GM12878 (cell line): ENCODE measurements at regions of chr18 and their contacts with region 1.

Region 1: GRCh38 chr18:35497370-35498197 is at the start of gene INO80C:
- DNase-seq: peak; percentile 85
- ATAC-seq: peak; percentile 92
- H3K4me3 ChIP-seq: peak within 1 kb of the TSS; percentile 80
- H3K27ac ChIP-seq: peak within 1 kb of the TSS; percentile 98
- H3K4me1 ChIP-seq: no peaks in the 10 kb centered on the region; the same call in 1 of the 2 replicates
- H3K27me3 ChIP-seq: no peaks in the 10 kb centered on the region
- CTCF ChIP-seq: no peak
- EP300 ChIP-seq: peak; percentile 4 to 62; a peak in 2 of 4 replicates
- POLR2A ChIP-seq: peak; percentile 98
- RAD21 ChIP-seq: peak; percentile 31; the same call in 1 of the 2 replicates
- polyA plus RNA-seq, gene INO80C: 25.0 to 31.6 TPM

Region 2: DNA sequence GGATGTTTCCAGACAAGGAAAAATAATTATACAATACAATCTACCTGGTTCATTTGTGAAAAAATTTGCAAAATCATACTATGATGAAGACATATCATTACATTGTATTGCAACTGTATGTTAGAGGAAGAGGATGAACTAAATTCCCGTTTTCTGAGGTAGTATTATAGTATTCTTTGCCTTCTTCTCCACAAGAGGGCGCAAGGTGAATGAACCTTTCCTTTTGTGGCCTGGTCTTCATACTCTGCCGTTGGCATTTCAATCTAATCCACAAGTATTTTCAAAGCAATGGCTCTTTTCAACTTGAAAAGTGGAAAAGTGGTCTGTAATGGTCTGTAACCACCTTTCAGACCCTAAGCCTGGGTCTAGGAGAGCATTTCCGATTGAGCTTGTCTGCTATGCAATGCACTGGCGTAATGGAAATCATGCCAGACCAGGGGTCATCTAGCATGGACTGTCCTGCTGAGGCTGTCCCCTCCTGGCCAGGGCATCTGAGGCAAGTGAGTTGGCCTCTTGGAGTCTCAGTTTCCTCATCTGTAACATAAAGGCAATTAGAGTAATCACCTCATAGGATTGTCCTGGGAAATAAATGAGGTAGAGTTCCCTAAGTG is 89.6 kb before region 1 on chr18:
- CTCF ChIA-PET with region 1: interaction called, 21 read pairs
- POLR2A ChIA-PET with region 1: interaction called, 4 read pairs
- RAD21 ChIA-PET with region 1: interaction called, 7 read pairs
- SMC1A ChIA-PET with region 1: interaction called, 18 read pairs
- in situ Hi-C with region 1: no loop called
- intact Hi-C with region 1: loop called (anchors 5 kb)
- DNase-seq: no peak
- ATAC-seq: peak; percentile 78
- H3K4me3 ChIP-seq: no peak overlapping the region
- H3K27ac ChIP-seq: no peak overlapping the region
- H3K4me1 ChIP-seq: peaks cover 21% of the 10 kb centered on the region
- H3K27me3 ChIP-seq: no peaks in the 10 kb centered on the region
- CTCF ChIP-seq: peak; percentile 67 to 85 (median 76)
- EP300 ChIP-seq: no peak
- POLR2A ChIP-seq: no peak
- RAD21 ChIP-seq: peak; percentile 93

Region 3: GRCh38 chr18:35467624-35468016 is 30.0 kb before region 1 on chr18:
- CTCF ChIA-PET with region 1: interaction called, 4 read pairs
- POLR2A ChIA-PET with region 1: interaction called, 16 read pairs
- RAD21 ChIA-PET with region 1: interaction called, 8 read pairs
- SMC1A ChIA-PET with region 1: interaction called, 10 read pairs
- in situ Hi-C with region 1: no loop called
- intact Hi-C with region 1: no loop called
- DNase-seq: peak; percentile 19
- ATAC-seq: peak; percentile 87
- H3K4me3 ChIP-seq: no peak overlapping the region
- H3K27ac ChIP-seq: no peak overlapping the region
- H3K4me1 ChIP-seq: peaks cover 17% of the 10 kb centered on the region
- H3K27me3 ChIP-seq: no peaks in the 10 kb centered on the region
- CTCF ChIP-seq: no peak
- EP300 ChIP-seq: no peak
- POLR2A ChIP-seq: no peak
- RAD21 ChIP-seq: no peak

Region 4: DNA sequence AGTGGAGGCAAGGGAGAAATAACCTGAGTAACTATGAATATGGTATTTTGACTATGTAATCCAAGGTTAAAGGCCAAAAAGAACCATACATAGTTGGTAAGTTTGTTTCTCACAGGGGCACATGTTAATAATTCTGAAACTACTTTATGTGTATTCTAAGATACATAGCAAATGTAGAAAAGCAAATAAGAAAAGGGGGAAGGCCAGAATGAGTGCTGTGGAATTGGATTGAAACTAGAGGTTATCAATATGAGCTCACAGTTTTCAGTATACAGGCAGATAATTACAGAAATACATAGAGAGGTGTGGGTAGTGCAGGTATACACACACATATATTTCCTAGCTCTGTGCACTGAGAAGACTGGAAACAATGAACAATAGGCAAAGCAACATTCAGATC is 13.6 kb before region 1 on chr18:
- CTCF ChIA-PET with region 1: interaction called, 12 read pairs
- POLR2A ChIA-PET with region 1: interaction called, 106 read pairs
- RAD21 ChIA-PET with region 1: interaction called, 57 read pairs
- SMC1A ChIA-PET with region 1: interaction called, 122 read pairs
- in situ Hi-C with region 1: no loop called
- intact Hi-C with region 1: no loop called
- DNase-seq: no peak
- ATAC-seq: peak; percentile 89
- H3K4me3 ChIP-seq: no peak overlapping the region
- H3K27ac ChIP-seq: no peak overlapping the region
- H3K4me1 ChIP-seq: no peaks in the 10 kb centered on the region; the same call in 1 of the 2 replicates
- H3K27me3 ChIP-seq: no peaks in the 10 kb centered on the region
- CTCF ChIP-seq: no peak
- EP300 ChIP-seq: no peak
- POLR2A ChIP-seq: no peak
- RAD21 ChIP-seq: no peak

Region 5: DNA sequence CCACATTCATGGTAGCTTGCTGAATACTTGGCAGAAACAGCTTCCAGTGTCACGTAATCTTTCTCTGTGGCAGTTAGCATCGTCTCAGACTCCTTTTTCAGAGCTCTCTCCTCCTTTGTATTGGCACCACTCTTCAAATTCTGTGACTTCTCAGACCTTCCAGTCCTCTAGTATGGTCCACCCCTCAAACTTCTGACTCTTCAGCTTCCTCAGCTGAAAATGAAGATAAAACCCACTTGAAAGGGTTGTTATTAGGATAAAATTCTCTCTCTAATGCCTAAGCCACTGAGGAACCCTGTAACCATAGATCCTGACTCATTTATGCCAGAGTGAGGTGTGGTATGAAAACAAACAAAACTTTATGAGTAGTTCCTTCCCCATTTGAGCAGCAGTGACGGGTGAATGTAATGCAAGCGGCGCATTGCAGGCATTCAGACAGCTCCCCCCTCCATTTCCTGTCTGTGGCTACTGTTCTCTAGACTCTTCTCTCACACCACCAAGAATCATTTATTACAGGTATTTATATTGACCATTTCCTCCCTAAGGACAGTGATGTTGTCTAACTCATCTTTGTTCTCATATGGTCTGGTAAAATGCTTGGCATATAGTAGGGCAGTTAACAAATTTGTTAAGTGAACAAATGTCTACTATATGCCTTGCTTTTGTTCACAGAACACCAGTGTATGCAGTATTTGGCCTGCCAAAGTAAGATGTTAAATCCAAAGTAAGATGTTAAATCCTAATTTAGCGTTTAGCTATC is 119.3 kb after region 1 on chr18:
- CTCF ChIA-PET with region 1: no interaction called
- POLR2A ChIA-PET with region 1: interaction called, 4 read pairs
- RAD21 ChIA-PET with region 1: interaction called, 7 read pairs
- SMC1A ChIA-PET with region 1: interaction called, 3 read pairs
- in situ Hi-C with region 1: no loop called
- intact Hi-C with region 1: loop called (anchors 5 kb)
- DNase-seq: peak; percentile 88
- ATAC-seq: peak; percentile 97
- H3K4me3 ChIP-seq: peak overlapping the region; percentile 38; the same call in 1 of the 2 replicates
- H3K27ac ChIP-seq: peak overlapping the region; percentile 54
- H3K4me1 ChIP-seq: peaks cover 15% of the 10 kb centered on the region
- H3K27me3 ChIP-seq: no peaks in the 10 kb centered on the region
- CTCF ChIP-seq: no peak
- EP300 ChIP-seq: peak; percentile 80 to 92; a peak in 3 of 4 replicates
- POLR2A ChIP-seq: no peak
- RAD21 ChIP-seq: peak; percentile 25; the same call in 1 of the 2 replicates